ENCODE measurements at regions of chr10 and their contacts with region 1.

Region 1: DNA sequence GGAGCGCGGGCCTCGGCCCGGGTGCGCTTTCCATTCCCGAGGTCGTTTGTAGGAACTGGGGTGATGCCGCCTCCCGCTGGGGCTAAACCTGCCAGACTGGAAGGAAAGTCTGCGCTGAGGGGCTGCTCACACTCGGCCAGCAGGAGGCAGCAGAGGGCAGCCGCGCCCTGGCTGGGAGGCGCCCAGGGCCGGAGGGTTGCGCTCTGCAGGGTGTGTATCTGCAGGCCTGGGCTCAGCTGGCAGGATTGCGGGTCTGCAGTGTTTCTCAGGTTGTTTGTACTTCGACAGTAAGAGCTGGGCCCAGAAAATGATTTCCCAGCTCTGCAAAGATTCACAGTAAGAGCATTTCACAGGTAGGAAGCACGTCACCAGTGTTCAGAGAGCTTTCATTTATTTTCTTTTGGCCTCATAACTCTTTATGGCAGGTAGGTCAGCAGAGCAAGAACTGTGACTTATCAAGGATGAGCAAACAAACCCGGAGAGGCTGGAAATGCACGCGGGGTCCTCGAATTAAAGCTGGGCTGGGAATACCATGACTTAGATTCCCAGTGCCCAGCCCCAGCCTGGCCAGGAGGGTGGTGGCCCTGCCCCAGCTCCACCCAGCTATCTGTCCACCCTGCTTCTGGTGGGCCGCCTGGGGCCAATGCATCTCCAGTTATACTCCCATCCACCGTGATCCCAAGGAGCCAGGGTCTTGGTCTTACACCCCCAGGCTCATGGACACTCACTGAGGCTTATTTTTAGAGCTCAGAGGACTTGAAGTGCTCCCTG is 15.2 kb upstream of the PPP2R2D start:
- DNase-seq: peak; percentile 40 to 63 (median 51)
- H3K4me3 ChIP-seq: no peak overlapping the region
- H3K4me3 Mint-ChIP-seq: no peak overlapping the region
- H3K27ac ChIP-seq: no peak overlapping the region
- H3K27ac Mint-ChIP-seq: peak overlapping the region in 1 of 7 donors; percentile 7
- H3K4me1 ChIP-seq: no peaks in the 10 kb centered on the region
- H3K4me1 Mint-ChIP-seq: peaks cover 2% of the 10 kb centered on the region
- H3K27me3 ChIP-seq: no peaks in the 10 kb centered on the region
- H3K27me3 Mint-ChIP-seq: peaks cover 0 to 4% (median 3%) of the 10 kb centered on the region in 3 donors
- CTCF ChIP-seq: peak; percentile 93

Region 2: DNA sequence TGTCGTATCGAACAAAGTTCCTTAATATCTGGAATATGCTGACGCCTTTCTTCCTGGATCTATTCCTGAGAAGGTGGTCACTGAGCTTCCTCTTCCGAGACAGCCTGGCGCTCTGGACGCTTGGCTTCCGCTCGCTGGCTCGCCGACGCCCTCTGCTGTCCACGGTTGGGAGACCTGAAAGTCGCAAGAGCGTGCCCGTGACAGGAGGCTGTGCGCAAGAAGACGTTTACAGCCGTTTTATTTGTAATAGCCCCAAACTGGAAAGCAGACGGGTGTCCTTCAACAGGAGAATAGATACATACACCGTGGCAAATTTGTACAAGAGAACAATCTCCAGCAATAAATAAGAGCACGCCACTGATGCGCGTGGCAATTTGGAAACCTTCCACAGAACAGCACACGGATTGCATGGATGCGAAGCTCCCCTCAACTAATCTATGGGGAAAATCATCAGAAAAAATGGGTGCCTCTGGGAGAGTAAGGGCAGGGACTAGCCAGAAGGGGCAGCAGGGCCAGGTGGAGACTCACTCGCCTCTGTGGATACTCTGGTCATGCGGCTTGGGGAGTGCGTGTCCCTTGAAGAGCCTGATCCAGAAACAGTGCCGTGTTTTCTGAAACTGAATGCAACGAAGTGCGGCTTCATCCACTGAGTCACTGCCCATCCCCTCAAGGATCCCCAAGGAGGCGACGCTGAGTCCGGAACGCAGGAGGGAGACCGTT is 137.7 kb after region 1 on chr10:
- intact Hi-C with region 1: loop called (anchors 1 to 5 kb)
- DNase-seq: peak; percentile 46 to 68 (median 57)
- H3K4me3 ChIP-seq: no peak overlapping the region
- H3K4me3 Mint-ChIP-seq: peak overlapping the region in 1 of 2 donors; percentile 73
- H3K27ac ChIP-seq: no peak overlapping the region
- H3K27ac Mint-ChIP-seq: no peak overlapping the region
- H3K4me1 ChIP-seq: peaks cover 0 to 7% of the 10 kb centered on the region in 2 donors
- H3K4me1 Mint-ChIP-seq: peaks cover 8% of the 10 kb centered on the region
- H3K27me3 ChIP-seq: peaks cover 0 to 16% of the 10 kb centered on the region in 2 donors
- H3K27me3 Mint-ChIP-seq: peaks cover 18 to 33% (median 32%) of the 10 kb centered on the region in 3 donors
- CTCF ChIP-seq: peak; percentile 90